ENCODE measurements at regions of chr13 and their contacts with region 1.

Region 1: GRCh38 chr13:78658635-78659449 is at the start of gene OBI1:
- DNase-seq: peak; percentile 94
- ATAC-seq: peak; percentile 93
- H3K4me3 Mint-ChIP-seq: peak within 1 kb of the TSS; percentile 85
- H3K27ac Mint-ChIP-seq: peak within 1 kb of the TSS; percentile 97
- H3K4me1 Mint-ChIP-seq: peaks cover 33% of the 10 kb centered on the region
- H3K27me3 Mint-ChIP-seq: no peaks in the 10 kb centered on the region
- total RNA-seq, gene OBI1: 20.5 to 20.6 TPM

Region 2: DNA sequence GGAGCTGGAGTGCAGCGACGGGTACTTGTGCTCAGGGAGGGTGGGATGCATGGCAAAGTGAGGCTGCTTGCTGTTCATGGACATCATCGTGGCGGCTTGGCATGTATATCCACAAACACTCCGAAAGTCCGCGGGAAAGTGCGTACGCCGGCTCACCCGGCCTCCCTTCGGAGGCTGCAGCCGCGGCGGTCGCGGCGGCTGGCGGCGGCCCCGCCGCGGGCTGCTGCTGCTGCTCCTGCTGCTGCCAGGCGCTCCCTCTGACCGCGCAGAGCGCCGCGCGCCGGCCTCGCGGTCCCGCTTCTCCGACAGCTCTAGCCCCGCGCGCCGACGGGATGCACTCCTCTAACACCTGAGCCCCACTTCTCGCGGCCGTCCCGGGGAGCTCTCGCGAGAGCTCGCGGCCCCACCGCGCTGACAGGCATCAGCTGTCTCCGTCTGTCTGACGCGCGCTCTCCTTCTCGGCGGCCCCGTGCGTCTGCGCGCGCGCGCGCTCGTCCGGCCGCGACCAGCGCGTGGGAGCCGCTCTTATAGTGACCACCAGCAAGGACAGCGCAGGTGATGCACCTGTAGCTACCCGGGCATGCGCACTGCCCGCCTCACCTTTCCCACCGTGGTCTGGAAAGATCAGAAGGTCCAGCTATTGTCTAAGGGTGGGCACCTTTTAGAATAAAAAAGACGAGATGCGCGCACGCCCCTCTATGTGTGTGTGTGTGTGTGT is 55.4 kb before region 1 on chr13 and contains the start of gene POU4F1:
- CTCF ChIA-PET with region 1: interaction called, 3 read pairs
- POLR2A ChIA-PET with region 1: no interaction called
- intact Hi-C with region 1: loop called (anchors 2 kb)
- DNase-seq: peak; percentile 90
- ATAC-seq: peak; percentile 89
- H3K4me3 Mint-ChIP-seq: peak within 1 kb of the TSS; percentile 67
- H3K27ac Mint-ChIP-seq: no peak within 1 kb of the TSS
- H3K4me1 Mint-ChIP-seq: peaks cover 44% of the 10 kb centered on the region
- H3K27me3 Mint-ChIP-seq: peaks cover 83% of the 10 kb centered on the region
- total RNA-seq, gene POU4F1: 0.21 to 0.26 TPM

Region 3: DNA sequence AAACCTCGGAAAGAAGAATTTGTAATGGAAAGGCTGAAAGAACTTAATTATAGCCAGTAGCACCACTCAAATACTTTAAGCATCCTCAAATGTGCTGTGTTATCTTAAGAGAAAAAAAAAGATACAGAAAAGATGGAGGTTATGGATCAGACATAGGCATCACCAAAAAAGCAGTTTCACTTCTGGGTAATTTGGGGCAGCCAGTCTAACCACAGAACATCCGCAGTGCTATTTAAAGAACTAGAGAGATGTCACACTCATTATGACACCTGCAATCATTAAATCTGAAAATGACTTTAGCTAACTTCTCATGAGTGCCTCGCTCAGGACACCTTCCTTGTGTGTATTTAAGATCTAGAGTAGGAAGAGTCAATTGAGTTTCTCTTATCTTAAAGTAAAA is 535.4 kb after region 1 on chr13:
- CTCF ChIA-PET with region 1: interaction called, 3 read pairs
- POLR2A ChIA-PET with region 1: no interaction called
- intact Hi-C with region 1: loop called in 1 of 2 experiments (anchors 5 kb)
- DNase-seq: peak; percentile 75
- ATAC-seq: peak; percentile 92
- H3K4me3 Mint-ChIP-seq: no peak overlapping the region
- H3K27ac Mint-ChIP-seq: peak overlapping the region; percentile 45
- H3K4me1 Mint-ChIP-seq: peaks cover 39% of the 10 kb centered on the region
- H3K27me3 Mint-ChIP-seq: peaks cover 2% of the 10 kb centered on the region

Region 4: GRCh38 chr13:79405829-79406596 is 747.2 kb after region 1 on chr13 and contains the start of gene RBM26:
- CTCF ChIA-PET with region 1: no interaction called
- POLR2A ChIA-PET with region 1: no interaction called
- intact Hi-C with region 1: loop called (anchors 2 to 10 kb)
- DNase-seq: peak; percentile 97
- ATAC-seq: peak; percentile 87
- H3K4me3 Mint-ChIP-seq: no peak within 1 kb of the TSS
- H3K27ac Mint-ChIP-seq: peak within 1 kb of the TSS; percentile 98
- H3K4me1 Mint-ChIP-seq: peaks cover 44% of the 10 kb centered on the region
- H3K27me3 Mint-ChIP-seq: no peaks in the 10 kb centered on the region
- total RNA-seq, gene RBM26: 61.3 to 79.6 TPM

Measured in activated CD4-positive, alpha-beta T cell treated with anti-CD3 and anti-CD28 coated beads for 36 hours (primary cell).